ENCODE measurements at regions of chr7 and their contacts with region 1.

Region 1: DNA sequence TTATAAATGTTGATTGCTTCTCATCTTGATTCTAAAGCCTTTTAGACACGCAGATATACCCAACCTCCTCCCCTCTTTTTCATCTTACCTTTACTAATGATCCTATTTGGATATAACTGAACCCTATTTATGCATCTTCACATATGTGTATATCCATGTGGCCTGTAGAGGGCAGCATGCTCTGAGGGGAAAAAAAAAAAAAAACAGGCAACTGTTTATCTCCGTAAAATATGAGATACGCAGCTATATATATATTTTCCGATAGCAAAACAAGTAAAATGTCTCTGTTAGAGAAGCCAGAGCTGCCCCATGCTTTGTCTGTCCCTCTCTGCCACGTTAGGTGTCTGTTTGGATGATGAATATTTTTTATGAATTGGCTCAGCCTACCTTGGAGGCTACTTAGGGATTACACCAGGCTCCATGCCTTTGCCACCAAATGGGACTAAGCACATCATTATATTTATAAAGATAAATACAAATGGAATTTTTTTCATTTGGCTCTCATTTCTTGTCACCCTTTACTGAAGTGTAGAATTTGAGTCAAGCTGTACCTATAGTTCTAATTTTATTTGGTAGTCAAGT is 174.8 kb upstream of the FZD1 start:
- DNase-seq: peak; percentile 85
- H3K4me3 ChIP-seq: no peak overlapping the region
- H3K27ac ChIP-seq: peak overlapping the region; percentile 89
- H3K4me1 ChIP-seq: peaks cover 83% of the 10 kb centered on the region
- H3K27me3 ChIP-seq: no peaks in the 10 kb centered on the region
- CTCF ChIP-seq: peak; percentile 91

Region 2: DNA sequence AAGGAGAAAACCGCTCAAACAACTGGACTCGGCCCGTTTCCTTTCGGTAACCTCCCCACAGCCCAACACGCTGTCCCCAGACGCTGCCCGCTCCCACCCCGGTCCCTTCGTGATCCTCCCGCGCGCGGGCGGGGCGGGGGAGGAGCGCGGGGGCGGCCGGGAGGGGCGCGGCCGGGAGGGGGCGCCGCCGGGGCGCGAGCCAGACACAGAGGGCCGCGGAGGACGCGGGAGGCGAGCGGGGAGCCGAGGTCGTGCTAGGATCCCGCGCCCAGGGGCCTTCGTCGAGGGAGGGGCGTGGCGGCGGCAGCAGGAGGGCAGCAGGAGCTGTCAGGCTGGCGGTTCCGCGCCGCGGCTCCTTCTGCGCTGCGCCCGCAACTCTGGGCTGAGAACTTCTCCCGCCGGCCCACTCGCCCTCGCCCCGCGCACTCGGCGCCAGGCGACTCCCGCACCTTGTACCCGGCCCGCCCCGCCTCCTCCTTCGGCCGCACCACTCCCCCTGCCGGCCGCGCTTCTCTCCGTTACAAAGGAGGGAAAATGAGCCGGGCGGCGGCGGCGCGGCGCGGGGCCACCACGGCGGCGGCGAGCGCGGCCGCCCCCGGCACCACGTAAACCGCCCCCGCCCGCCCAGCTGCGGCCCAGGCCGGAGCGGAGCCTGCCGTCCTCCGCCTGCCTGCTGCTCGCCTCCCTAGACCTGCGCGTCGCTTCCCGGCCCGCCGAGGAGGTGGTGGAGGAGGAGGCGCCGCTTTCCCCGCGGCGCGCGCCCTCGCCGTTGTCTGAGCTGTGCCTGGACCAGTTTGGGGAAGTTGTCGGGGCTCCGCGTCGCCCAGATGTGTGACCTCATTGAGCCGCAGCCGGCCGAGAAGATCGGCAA is 493.4 kb before region 1 on chr7 and contains the start of gene CDK14:
- CTCF ChIA-PET with region 1: no interaction called
- POLR2A ChIA-PET with region 1: no interaction called
- intact Hi-C with region 1: loop called (anchors 5 kb)
- DNase-seq: peak; percentile 86
- H3K4me3 ChIP-seq: peak within 1 kb of the TSS; percentile 69
- H3K27ac ChIP-seq: peak within 1 kb of the TSS; percentile 94
- H3K4me1 ChIP-seq: peaks cover 46% of the 10 kb centered on the region
- H3K27me3 ChIP-seq: no peaks in the 10 kb centered on the region
- CTCF ChIP-seq: peak; percentile 43
- total RNA-seq, gene CDK14: 128 and 131 TPM in 2 replicates

Region 3: GRCh38 chr7:90777465-90777864 is 312.0 kb before region 1 on chr7:
- CTCF ChIA-PET with region 1: no interaction called
- POLR2A ChIA-PET with region 1: no interaction called
- intact Hi-C with region 1: loop called (anchors 2 kb)
- DNase-seq: no peak
- H3K4me3 ChIP-seq: no peak overlapping the region
- H3K27ac ChIP-seq: peak overlapping the region; percentile 91
- H3K4me1 ChIP-seq: peaks cover 35% of the 10 kb centered on the region
- H3K27me3 ChIP-seq: no peaks in the 10 kb centered on the region
- CTCF ChIP-seq: no peak

Region 4: GRCh38 chr7:91325726-91326125 is 236.3 kb after region 1 on chr7:
- CTCF ChIA-PET with region 1: no interaction called
- POLR2A ChIA-PET with region 1: no interaction called
- intact Hi-C with region 1: loop called (anchors 5 kb)
- DNase-seq: peak; percentile 97
- H3K4me3 ChIP-seq: no peak overlapping the region
- H3K27ac ChIP-seq: peak overlapping the region; percentile 93
- H3K4me1 ChIP-seq: peaks cover 59% of the 10 kb centered on the region
- H3K27me3 ChIP-seq: no peaks in the 10 kb centered on the region
- CTCF ChIP-seq: no peak

Region 5: GRCh38 chr7:91835846-91836368 is 746.4 kb after region 1 on chr7:
- CTCF ChIA-PET with region 1: no interaction called
- POLR2A ChIA-PET with region 1: no interaction called
- intact Hi-C with region 1: loop called (anchors 2 kb)
- DNase-seq: peak; percentile 97
- H3K4me3 ChIP-seq: no peak overlapping the region
- H3K27ac ChIP-seq: peak overlapping the region; percentile 83
- H3K4me1 ChIP-seq: peaks cover 55% of the 10 kb centered on the region
- H3K27me3 ChIP-seq: no peaks in the 10 kb centered on the region
- CTCF ChIP-seq: no peak

Measured in A673 (cell line).